ENCODE measurements at regions of chr2 and their contacts with region 1.

Region 1: DNA sequence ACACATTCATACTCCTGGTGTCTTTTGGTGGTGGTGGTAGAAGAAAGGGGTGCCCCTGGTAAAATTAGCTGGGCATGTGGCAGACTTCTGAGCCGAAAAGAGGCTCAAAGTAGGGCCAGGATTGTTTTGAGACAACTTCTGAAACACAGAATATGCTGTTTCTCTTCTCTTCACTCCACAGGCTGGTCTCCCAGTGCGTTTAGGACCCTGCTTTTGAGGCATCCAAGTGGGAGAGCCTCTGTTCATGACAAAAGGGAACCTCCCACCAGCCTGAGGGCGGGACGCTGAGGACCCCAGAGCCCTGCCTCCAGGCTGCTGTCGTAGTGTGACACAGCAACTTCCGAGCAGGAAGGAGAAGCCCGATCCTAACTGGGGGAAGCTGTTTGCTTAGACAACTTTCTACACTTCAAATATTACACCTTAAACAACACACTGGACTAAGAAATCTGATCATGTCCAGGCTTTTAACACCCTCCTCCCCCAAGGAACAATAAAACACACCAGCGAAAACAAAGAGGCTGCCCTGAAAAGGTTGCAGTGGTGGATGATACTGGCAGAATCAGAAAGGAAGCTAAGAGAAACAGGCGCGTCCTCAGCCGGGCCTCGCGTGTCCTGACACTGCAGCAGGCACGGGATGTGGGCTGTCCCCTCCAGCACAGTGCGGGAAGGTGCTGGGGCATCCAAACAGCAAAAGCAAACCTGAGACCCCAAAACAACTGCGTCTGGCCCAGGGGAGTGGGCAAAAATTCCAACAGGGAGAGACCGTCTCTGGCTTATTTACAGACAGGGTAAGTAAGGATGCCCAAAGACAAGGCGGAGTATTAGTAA is 9.3 kb downstream of the SERTAD2 start:
- DNase-seq: peak in 2 of 5 donors; percentile 35 to 38
- H3K4me3 ChIP-seq: no peak overlapping the region
- H3K4me3 Mint-ChIP-seq: peak overlapping the region; percentile 82 to 92 (median 86)
- H3K27ac ChIP-seq: no peak overlapping the region
- H3K27ac Mint-ChIP-seq: peak overlapping the region; percentile 7 to 87 (median 83)
- H3K4me1 ChIP-seq: peaks cover 52% of the 10 kb centered on the region
- H3K4me1 Mint-ChIP-seq: peaks cover 28 to 70% (median 43%) of the 10 kb centered on the region in 4 donors
- H3K27me3 ChIP-seq: no peaks in the 10 kb centered on the region
- H3K27me3 Mint-ChIP-seq: no peaks in the 10 kb centered on the region

Region 2: DNA sequence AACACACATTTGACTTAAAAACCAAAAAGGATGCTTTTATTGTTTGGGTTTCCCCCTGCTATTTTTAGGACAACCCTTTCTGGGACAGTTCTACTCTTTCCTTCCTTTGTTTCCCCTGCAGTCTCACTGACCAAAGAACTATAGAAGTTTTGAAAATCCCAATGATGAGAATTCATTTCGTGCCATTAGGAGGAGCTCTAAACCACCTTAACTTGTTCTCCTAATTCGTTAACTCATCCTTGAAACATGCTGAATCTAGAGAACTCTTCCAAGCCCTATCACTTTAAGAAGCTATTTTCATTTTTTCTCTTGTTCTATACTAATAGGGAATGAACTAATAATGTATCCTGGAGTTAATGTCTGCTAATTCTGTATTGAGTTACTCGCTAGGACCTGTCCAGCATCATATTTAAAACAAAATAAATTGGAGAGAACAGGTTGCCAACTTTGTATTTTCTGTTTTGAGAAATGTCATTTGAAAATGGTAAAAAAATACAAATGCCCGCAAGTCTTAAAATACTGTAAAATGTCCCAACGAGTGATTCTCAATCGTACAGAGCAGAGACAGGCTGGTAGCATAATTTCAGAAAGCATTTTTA is 57.4 kb before region 1 on chr2:
- CTCF ChIA-PET with region 1: interaction called, 24 read pairs
- POLR2A ChIA-PET with region 1: no interaction called
- intact Hi-C with region 1: loop called (anchors 1 kb)
- DNase-seq: peak in 4 of 5 donors; percentile 26 to 46 (median 38)
- H3K4me3 ChIP-seq: no peak overlapping the region
- H3K4me3 Mint-ChIP-seq: no peak overlapping the region
- H3K27ac ChIP-seq: no peak overlapping the region
- H3K27ac Mint-ChIP-seq: no peak overlapping the region
- H3K4me1 ChIP-seq: no peaks in the 10 kb centered on the region
- H3K4me1 Mint-ChIP-seq: peaks cover 0 to 4% (median 2%) of the 10 kb centered on the region in 4 donors
- H3K27me3 ChIP-seq: no peaks in the 10 kb centered on the region
- H3K27me3 Mint-ChIP-seq: no peaks in the 10 kb centered on the region

Region 3: DNA sequence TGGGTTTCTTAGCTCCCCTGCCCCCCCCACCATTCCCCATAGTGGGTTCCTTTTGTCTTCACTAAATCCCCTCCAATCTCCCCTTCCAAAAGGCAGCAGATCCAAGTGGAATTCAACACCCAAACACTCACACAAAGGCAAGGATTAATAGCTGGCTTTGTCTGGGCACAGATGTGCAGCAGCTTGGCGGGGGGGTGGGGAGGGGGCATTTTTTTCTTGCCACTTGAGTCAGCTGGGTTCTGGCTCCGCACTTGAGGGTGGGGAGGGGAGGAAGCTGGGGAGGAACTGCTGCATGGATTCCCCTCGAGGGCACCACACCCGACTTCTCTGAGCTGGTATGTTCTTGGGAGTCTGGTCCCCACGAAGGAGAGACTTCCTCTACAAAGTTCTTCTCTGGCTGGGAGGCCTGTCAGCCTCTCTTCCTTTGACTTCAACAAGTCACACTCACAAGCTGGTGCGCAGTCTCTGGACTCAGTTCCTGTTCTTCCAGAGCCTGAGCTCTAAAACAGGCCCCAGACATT is 26.7 kb before region 1 on chr2:
- CTCF ChIA-PET with region 1: interaction called, 10 read pairs
- POLR2A ChIA-PET with region 1: no interaction called
- intact Hi-C with region 1: no loop called
- DNase-seq: no peak
- H3K4me3 ChIP-seq: no peak overlapping the region
- H3K4me3 Mint-ChIP-seq: no peak overlapping the region
- H3K27ac ChIP-seq: no peak overlapping the region
- H3K27ac Mint-ChIP-seq: no peak overlapping the region
- H3K4me1 ChIP-seq: no peaks in the 10 kb centered on the region
- H3K4me1 Mint-ChIP-seq: peaks cover 0 to 2% (median 0%) of the 10 kb centered on the region in 4 donors
- H3K27me3 ChIP-seq: no peaks in the 10 kb centered on the region
- H3K27me3 Mint-ChIP-seq: no peaks in the 10 kb centered on the region

Region 4: DNA sequence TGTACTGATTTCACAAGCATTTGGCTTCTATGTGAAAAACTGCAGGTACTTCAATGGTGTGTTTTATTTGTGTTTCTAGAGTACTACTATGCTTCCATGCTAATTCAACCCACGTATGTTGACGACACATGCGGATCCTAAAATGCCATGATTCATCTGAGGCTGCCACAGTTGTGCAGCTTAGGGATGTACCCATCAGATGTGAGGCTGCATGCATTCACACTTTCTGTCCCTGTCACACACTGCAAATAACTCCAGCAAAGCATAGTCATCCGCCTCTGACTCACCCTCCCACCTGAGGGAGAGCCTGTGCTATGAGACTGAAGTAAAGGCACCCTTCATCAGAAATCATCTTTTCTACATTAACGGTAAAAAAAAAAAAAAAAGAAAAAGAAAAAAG is 31.5 kb after region 1 on chr2:
- CTCF ChIA-PET with region 1: interaction called, 10 read pairs
- POLR2A ChIA-PET with region 1: no interaction called
- intact Hi-C with region 1: no loop called
- DNase-seq: no peak
- H3K4me3 ChIP-seq: no peak overlapping the region
- H3K4me3 Mint-ChIP-seq: no peak overlapping the region
- H3K27ac ChIP-seq: no peak overlapping the region
- H3K27ac Mint-ChIP-seq: no peak overlapping the region
- H3K4me1 ChIP-seq: no peaks in the 10 kb centered on the region
- H3K4me1 Mint-ChIP-seq: peaks cover 0 to 20% (median 12%) of the 10 kb centered on the region in 4 donors
- H3K27me3 ChIP-seq: no peaks in the 10 kb centered on the region
- H3K27me3 Mint-ChIP-seq: no peaks in the 10 kb centered on the region

Region 5: GRCh38 chr2:64730551-64731262 is 86.3 kb after region 1 on chr2:
- CTCF ChIA-PET with region 1: interaction called, 17 read pairs
- POLR2A ChIA-PET with region 1: interaction called, 3 read pairs
- intact Hi-C with region 1: no loop called
- DNase-seq: peak; percentile 44 to 75 (median 50)
- H3K4me3 ChIP-seq: peak overlapping the region; percentile 32 to 68
- H3K4me3 Mint-ChIP-seq: peak overlapping the region; percentile 83 to 94 (median 89)
- H3K27ac ChIP-seq: peak overlapping the region; percentile 72
- H3K27ac Mint-ChIP-seq: peak overlapping the region; percentile 95 to 98 (median 97)
- H3K4me1 ChIP-seq: peaks cover 42% of the 10 kb centered on the region
- H3K4me1 Mint-ChIP-seq: peaks cover 31 to 61% (median 43%) of the 10 kb centered on the region in 4 donors
- H3K27me3 ChIP-seq: no peaks in the 10 kb centered on the region
- H3K27me3 Mint-ChIP-seq: no peaks in the 10 kb centered on the region

Region 6: DNA sequence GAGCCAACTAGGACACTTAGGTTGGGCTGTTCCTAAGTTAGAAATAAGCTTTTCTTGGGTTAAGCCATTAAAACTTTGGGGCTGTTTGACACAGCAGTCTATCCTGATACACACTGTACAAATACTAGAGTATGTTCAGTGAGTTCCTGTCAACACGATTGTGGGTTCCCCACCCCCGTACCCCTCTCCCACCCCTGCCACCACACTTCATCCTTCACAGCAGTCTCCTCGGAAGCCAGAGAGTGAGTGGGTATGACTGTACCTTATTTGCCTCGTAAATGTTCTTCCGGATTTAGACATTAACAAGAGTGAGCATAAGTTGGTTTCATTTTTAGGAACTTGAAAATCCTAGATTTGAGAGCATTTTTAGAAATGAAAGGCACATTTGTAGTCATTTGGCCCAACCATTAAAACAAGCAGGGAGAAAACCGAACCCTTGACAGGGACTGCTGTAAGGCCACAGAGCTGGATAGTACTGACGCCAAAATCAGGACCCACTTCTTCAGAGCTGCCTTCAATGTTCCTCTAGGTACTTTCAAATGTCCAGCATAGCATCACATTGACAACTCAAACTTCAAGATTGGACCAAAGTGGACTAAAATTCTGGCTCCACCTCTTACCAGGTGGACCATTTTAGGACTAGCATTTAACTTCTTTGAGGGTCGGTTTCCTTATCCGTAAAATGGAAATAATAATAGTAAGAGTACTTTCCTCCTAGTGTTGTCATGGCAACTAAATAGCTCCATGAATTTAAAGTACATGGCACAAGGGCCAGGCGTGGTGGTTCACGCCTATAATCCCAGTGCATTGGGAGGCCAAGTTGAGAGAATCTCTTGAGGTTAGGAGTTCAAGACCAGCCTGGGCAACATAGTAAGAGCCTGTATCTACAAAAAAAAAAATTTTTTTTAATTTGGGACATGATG is 175.6 kb after region 1 on chr2:
- CTCF ChIA-PET with region 1: interaction called, 17 read pairs
- POLR2A ChIA-PET with region 1: no interaction called
- intact Hi-C with region 1: no loop called
- DNase-seq: peak; percentile 52 to 67 (median 64)
- H3K4me3 ChIP-seq: peak overlapping the region in 1 of 2 donors; percentile 29
- H3K4me3 Mint-ChIP-seq: peak overlapping the region; percentile 66 to 93 (median 80)
- H3K27ac ChIP-seq: peak overlapping the region; percentile 44
- H3K27ac Mint-ChIP-seq: peak overlapping the region; percentile 72 to 98 (median 92)
- H3K4me1 ChIP-seq: peaks cover 23% of the 10 kb centered on the region
- H3K4me1 Mint-ChIP-seq: peaks cover 15 to 34% (median 21%) of the 10 kb centered on the region in 4 donors
- H3K27me3 ChIP-seq: no peaks in the 10 kb centered on the region
- H3K27me3 Mint-ChIP-seq: peaks cover 0 to 2% of the 10 kb centered on the region in 2 donors

Region 7: DNA sequence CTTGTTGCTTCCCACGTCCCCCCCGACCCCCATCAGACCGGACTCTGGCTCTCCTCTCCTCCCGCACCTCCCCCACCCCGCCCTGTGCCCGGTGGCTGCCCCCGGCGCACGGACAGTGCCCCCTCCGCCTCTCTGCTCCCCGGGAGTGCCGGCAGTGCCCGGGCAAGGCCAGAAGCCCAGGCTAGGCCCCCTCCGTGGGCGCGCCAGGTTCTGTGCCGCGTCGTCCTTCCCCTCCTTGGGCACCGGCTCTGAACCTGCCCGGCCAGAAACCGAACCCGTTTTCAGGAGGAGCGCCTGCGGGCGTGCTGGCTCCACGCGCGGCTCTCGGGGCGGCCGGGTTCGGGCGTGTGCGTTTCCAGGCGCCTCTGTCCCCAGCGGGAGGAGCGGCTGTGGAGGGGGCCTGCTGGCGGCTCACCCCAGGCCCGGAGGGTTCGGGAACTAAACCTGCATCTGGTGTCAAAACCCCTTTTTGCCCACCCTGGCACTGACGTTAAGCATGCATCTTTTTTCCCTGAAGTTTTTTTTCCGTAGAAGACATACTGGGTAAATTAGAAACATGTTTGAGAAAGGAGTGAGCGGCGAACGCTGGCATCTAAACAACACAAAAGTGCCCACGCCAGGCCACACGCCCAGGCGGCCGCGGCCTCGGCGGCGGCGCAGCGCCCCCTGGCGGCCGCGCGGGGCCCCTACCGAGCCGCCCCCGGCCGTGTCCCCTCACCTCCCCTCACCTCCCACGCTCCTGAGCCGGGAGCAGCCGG is 220.9 kb after region 1 on chr2:
- CTCF ChIA-PET with region 1: interaction called, 22 read pairs
- POLR2A ChIA-PET with region 1: no interaction called
- intact Hi-C with region 1: loop called (anchors 1 kb)
- DNase-seq: peak in 4 of 5 donors; percentile 69 to 75 (median 70)
- H3K4me3 ChIP-seq: peak overlapping the region in 1 of 2 donors; percentile 60
- H3K4me3 Mint-ChIP-seq: peak overlapping the region; percentile 79 to 88 (median 82)
- H3K27ac ChIP-seq: no peak overlapping the region
- H3K27ac Mint-ChIP-seq: peak overlapping the region in 1 of 7 donors; percentile 64
- H3K4me1 ChIP-seq: peaks cover 10% of the 10 kb centered on the region
- H3K4me1 Mint-ChIP-seq: peaks cover 0 to 3% (median under 1%) of the 10 kb centered on the region in 4 donors
- H3K27me3 ChIP-seq: no peaks in the 10 kb centered on the region
- H3K27me3 Mint-ChIP-seq: peaks cover 2 to 3% of the 10 kb centered on the region in 2 donors

Region 8: DNA sequence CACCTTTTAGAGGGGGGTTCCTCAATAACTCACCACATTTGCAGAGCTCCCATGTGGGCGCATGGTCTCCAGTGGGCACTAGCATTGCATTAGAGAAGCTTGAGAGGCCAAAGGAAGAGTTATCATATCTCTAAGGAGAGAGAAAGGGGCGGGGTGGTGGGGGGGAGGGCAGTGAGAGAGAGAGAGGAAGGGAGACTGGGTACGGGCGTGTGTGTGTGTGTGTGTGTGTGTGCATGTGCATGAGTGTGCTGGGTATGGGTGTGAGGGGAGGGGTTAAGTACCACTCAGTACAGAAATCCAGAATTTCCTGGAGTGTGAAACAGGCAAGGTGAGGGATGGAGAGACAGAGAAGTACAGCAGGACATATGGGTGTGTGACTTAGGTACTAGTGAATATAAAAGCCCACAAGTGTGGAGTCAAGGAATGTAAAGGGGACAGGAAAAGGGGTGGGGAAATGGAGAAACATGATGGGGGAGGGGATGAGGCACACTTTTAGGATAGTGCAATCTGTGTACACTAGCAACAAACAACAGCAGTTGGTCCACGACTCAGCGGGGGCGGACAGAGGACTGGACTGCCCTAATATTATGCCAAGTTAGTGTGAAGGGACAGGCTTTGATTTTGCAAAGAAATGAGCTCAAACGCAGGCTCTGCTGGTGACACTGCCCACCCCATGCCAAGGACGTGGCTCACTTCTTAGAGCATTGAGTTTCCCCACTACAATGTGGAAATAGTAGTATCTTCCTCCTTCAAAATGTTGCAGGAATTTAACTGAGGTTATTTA is 696.7 kb after region 1 on chr2:
- CTCF ChIA-PET with region 1: no interaction called
- POLR2A ChIA-PET with region 1: no interaction called
- intact Hi-C with region 1: no loop called
- DNase-seq: no peak
- H3K4me3 ChIP-seq: no peak overlapping the region
- H3K4me3 Mint-ChIP-seq: no peak overlapping the region
- H3K27ac ChIP-seq: no peak overlapping the region
- H3K27ac Mint-ChIP-seq: no peak overlapping the region
- H3K4me1 ChIP-seq: no peaks in the 10 kb centered on the region
- H3K4me1 Mint-ChIP-seq: no peaks in the 10 kb centered on the region
- H3K27me3 ChIP-seq: no peaks in the 10 kb centered on the region
- H3K27me3 Mint-ChIP-seq: no peaks in the 10 kb centered on the region